CD8-positive, alpha-beta T cell (primary cell): ENCODE measurements at regions of chr15 and their contacts with region 1.

Region 1: DNA sequence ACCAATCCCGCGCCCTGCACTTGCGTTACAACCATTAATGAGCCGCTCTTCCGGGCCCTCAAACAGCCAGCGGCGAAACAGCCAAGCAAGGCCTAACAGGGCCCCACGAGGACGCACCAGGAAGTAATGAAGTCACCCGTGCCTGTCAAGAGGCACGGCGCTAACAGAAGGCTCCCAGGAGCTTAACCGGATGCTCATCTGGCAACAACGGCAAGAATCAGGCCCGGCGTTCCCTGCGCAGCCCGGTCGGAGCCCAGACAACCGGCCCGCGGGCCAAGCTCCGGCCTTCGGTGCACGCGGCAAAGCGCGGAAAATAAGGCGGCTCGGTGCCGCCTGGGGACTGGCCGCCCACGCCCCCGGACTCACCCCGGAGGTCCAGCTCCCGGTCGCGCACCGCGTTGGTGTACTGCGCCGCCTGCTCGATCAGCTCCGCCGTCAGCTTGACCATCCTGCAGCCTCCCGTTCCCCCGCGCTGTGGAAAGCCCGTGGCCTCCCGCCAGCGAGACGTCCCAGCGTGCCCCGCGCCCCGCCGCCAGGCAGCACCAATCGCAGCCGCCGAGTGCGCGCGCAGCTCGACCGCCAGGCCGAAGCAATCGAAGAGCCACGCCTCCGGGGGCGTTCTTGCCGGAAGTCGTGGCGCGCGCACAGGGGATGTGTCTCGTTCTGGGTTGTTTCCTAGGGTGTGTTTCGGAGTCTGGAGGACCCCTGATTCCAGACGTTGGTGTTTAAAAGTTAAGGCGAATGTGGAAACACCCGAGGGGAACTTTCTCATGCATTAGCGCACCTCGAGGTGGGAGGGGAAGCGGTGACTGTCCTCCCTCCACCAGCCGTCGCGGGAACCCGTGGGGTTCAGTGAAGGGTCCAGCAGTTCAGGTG is at the start of gene SNRPA1:
- DNase-seq: peak; percentile 94 to 98 (median 98)
- ATAC-seq: peak; percentile 80
- H3K4me3 ChIP-seq: peak within 1 kb of the TSS; percentile 68 to 97
- H3K4me3 Mint-ChIP-seq: peak within 1 kb of the TSS; percentile 94
- H3K27ac ChIP-seq: peak within 1 kb of the TSS; percentile 95 to 98
- H3K27ac Mint-ChIP-seq: peak within 1 kb of the TSS; percentile 96
- H3K4me1 ChIP-seq: peaks cover 38% of the 10 kb centered on the region
- H3K4me1 Mint-ChIP-seq: peaks cover 53% of the 10 kb centered on the region
- H3K27me3 ChIP-seq: no peaks in the 10 kb centered on the region
- H3K27me3 Mint-ChIP-seq: no peaks in the 10 kb centered on the region
- CTCF ChIP-seq: no peak
- total RNA-seq, gene SNRPA1: 228 to 247 TPM

Region 2: DNA sequence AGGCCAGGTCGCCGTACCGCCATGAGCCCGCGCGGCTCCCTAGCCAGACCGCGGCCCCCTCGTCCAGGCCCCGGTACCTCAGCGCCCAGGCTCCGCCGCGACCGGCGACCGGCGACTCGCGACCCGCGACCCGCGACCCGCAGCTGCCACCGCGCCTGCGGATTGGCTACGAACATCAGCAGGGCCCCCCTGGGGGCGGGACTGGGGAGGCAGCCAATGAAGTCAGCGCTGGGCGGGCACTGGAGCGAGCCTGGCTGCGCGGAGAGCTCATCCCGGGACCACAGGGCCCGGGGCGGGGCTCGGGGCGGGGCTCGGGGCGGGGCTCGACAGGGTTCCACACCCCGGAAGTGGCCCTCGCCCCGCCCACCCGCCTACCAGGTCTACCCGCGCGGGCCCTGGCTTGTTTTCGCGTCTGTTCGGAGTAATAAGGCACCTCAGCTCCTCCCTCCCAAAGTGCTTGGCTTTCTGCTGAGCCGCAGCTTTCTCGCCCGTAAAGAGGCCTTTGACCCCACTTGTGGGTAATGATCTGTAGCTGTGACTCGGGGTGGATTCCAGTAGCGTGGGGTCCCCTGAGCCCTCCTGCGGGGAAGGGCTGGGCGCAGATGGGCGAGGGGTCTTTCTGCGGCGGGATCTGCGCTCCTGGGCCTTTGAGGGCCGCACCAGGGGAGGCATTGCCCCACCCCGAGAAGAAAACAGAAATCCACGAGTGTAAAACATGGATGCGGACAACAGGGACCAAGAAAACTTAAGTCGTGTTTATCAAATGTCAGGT is 1561.5 kb before region 1 on chr15 and contains the start of gene LYSMD4:
- CTCF ChIA-PET with region 1: no interaction called
- POLR2A ChIA-PET with region 1: no interaction called
- intact Hi-C with region 1: loop called (anchors 5 to 10 kb)
- DNase-seq: peak; percentile 97 to 99 (median 98)
- ATAC-seq: peak; percentile 99
- H3K4me3 ChIP-seq: peak within 1 kb of the TSS; percentile 69 to 80
- H3K4me3 Mint-ChIP-seq: peak within 1 kb of the TSS; percentile 89
- H3K27ac ChIP-seq: peak within 1 kb of the TSS; percentile 62 to 87
- H3K27ac Mint-ChIP-seq: peak within 1 kb of the TSS; percentile 95
- H3K4me1 ChIP-seq: peaks cover 13% of the 10 kb centered on the region
- H3K4me1 Mint-ChIP-seq: peaks cover 19% of the 10 kb centered on the region
- H3K27me3 ChIP-seq: no peaks in the 10 kb centered on the region
- H3K27me3 Mint-ChIP-seq: no peaks in the 10 kb centered on the region
- CTCF ChIP-seq: no peak
- total RNA-seq, gene LYSMD4: 7.6 to 7.7 TPM

Region 3: GRCh38 chr15:101242160-101242998 is 52.6 kb before region 1 on chr15:
- CTCF ChIA-PET with region 1: no interaction called
- POLR2A ChIA-PET with region 1: interaction called, 7 read pairs
- intact Hi-C with region 1: loop called in 1 of 2 experiments (anchors 2 kb)
- DNase-seq: peak; percentile 35 to 93 (median 63)
- ATAC-seq: peak; percentile 88
- H3K4me3 ChIP-seq: peak overlapping the region; percentile 38 to 45
- H3K4me3 Mint-ChIP-seq: peak overlapping the region; percentile 71
- H3K27ac ChIP-seq: peak overlapping the region; percentile 13 to 76
- H3K27ac Mint-ChIP-seq: peak overlapping the region; percentile 91
- H3K4me1 ChIP-seq: peaks cover 85% of the 10 kb centered on the region
- H3K4me1 Mint-ChIP-seq: peaks cover 85% of the 10 kb centered on the region
- H3K27me3 ChIP-seq: no peaks in the 10 kb centered on the region
- H3K27me3 Mint-ChIP-seq: no peaks in the 10 kb centered on the region
- CTCF ChIP-seq: no peak

Region 4: DNA sequence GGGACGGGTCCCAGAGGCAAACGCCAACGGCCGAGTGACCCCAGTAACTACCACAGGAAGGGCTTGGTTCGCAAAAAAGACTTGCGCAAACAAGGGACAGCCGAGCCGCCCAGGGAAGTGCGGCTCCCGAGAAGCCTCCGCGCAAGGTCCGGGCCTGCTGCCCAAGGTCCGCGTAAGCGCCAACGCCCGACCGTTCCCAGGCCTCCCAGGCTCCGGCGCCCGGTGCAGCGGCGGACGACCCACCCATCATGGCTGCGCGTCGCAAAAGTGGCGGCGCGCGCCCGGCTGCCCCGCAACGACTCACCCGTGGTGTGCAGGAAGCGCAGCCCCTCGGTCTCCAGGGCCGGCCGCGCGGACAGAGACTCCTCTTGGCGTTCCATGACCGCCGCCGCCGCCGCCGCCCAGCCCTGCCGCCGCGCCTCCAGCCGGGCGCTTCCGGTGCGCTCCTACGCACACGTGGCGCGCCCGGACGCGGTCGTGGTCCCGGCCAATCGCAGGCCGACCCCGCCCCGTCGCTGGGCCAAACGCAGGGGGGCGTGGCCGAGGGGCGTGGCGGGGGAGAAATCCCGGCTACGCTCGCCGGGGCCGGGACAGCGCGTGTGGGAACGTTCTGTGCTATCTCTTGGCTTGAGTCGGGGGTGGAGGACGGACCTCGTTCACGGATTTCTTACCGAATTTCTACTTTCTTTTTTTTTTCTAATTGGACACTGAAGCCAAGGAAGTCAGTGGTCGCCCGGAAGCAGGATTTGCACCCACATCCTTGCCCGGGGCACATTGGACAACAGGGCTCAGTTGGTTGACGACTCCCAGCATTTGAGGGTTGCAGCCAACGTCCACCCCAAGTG is 17.7 kb before region 1 on chr15 and contains the start of gene SELENOS:
- CTCF ChIA-PET with region 1: interaction called, 3 read pairs
- POLR2A ChIA-PET with region 1: interaction called, 5 read pairs
- intact Hi-C with region 1: loop called (anchors 1 kb)
- DNase-seq: peak; percentile 62 to 94 (median 88)
- ATAC-seq: peak; percentile 93
- H3K4me3 ChIP-seq: peak within 1 kb of the TSS; percentile 75 to 77
- H3K4me3 Mint-ChIP-seq: peak within 1 kb of the TSS; percentile 95
- H3K27ac ChIP-seq: peak within 1 kb of the TSS; percentile 65 to 77
- H3K27ac Mint-ChIP-seq: peak within 1 kb of the TSS; percentile 93
- H3K4me1 ChIP-seq: peaks cover 16% of the 10 kb centered on the region
- H3K4me1 Mint-ChIP-seq: peaks cover 24% of the 10 kb centered on the region
- H3K27me3 ChIP-seq: no peaks in the 10 kb centered on the region
- H3K27me3 Mint-ChIP-seq: no peaks in the 10 kb centered on the region
- CTCF ChIP-seq: no peak
- total RNA-seq, gene SELENOS: 46.0 to 50.4 TPM

Region 5: DNA sequence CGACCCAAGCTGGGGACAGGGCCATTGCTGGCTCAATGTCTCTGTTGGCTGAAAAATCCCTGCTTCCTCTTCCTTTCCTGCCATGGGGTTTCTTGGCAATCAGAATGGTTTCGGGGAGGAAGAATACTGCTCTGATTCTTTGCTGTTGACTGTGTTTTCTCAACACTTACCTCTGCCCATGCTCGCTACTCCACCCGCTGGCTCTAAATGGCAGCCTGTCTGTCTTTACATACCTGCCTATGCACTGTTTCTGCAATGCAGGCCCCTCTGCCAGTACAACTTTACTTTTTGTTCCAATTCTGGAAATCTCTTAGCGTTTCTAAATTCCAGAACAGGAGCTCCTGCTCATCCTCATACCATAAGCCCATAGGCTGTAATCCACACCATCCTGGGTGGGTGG is 38.4 kb after region 1 on chr15:
- CTCF ChIA-PET with region 1: interaction called, 3 read pairs
- POLR2A ChIA-PET with region 1: interaction called, 4 read pairs
- intact Hi-C with region 1: loop called (anchors 1 kb)
- DNase-seq: peak in 2 of 9 experiments; percentile 30 to 42
- ATAC-seq: peak; percentile 21
- H3K4me3 ChIP-seq: peak overlapping the region in 1 of 2 experiments; percentile 33
- H3K4me3 Mint-ChIP-seq: no peak overlapping the region
- H3K27ac ChIP-seq: peak overlapping the region; percentile 81 to 86
- H3K27ac Mint-ChIP-seq: peak overlapping the region; percentile 77
- H3K4me1 ChIP-seq: peaks cover 15% of the 10 kb centered on the region
- H3K4me1 Mint-ChIP-seq: peaks cover 25% of the 10 kb centered on the region
- H3K27me3 ChIP-seq: no peaks in the 10 kb centered on the region
- H3K27me3 Mint-ChIP-seq: no peaks in the 10 kb centered on the region
- CTCF ChIP-seq: no peak

Region 6: DNA sequence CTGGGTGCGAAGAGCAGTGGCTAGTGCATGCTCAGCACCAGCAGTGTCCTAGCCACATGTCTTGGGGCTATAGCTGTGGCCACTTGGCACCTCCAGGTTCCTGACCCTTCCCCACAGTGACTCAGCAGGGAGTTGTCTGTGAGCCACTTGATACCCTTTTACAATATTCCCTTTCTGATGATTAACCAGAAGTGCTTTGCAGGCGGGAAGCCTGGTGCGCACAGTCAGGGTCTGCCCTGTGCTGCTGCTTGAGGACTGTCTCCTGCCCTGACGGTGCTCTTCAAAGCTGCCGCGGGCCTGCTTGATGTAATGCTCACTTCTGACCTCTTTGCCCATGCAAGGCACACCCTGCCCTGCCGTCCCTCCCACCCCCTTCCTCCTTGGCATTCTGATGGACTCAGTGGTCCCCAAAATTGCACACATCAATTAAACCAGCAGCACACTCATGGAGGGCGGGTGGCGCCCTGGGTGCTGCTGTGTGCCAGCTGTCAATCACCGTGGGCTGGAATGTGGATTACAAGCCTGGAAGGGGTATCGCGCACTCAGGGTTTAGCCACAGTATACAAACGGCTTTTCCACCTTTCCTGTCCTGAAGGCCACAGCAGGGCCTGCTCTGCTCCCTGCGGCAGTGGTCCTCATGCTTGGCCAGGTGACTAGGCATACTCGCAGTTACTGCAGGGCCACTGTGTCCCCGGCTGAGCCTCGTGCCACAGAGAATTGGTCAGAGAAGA is 235.4 kb after region 1 on chr15:
- CTCF ChIA-PET with region 1: no interaction called
- POLR2A ChIA-PET with region 1: no interaction called
- intact Hi-C with region 1: no loop called
- DNase-seq: no peak
- ATAC-seq: no peak
- H3K4me3 ChIP-seq: no peak overlapping the region
- H3K4me3 Mint-ChIP-seq: no peak overlapping the region
- H3K27ac ChIP-seq: no peak overlapping the region
- H3K27ac Mint-ChIP-seq: no peak overlapping the region
- H3K4me1 ChIP-seq: no peaks in the 10 kb centered on the region
- H3K4me1 Mint-ChIP-seq: no peaks in the 10 kb centered on the region
- H3K27me3 ChIP-seq: no peaks in the 10 kb centered on the region
- H3K27me3 Mint-ChIP-seq: peaks cover 13% of the 10 kb centered on the region
- CTCF ChIP-seq: no peak

Region 7: GRCh38 chr15:101641166-101641764 is 346.3 kb after region 1 on chr15:
- CTCF ChIA-PET with region 1: interaction called, 30 read pairs
- POLR2A ChIA-PET with region 1: interaction called, 3 read pairs
- intact Hi-C with region 1: loop called in 1 of 2 experiments (anchors 1 kb)
- DNase-seq: peak; percentile 53 to 85 (median 75)
- ATAC-seq: peak; percentile 81
- H3K4me3 ChIP-seq: no peak overlapping the region
- H3K4me3 Mint-ChIP-seq: no peak overlapping the region
- H3K27ac ChIP-seq: peak overlapping the region in 1 of 2 experiments; percentile 59
- H3K27ac Mint-ChIP-seq: peak overlapping the region; percentile 89
- H3K4me1 ChIP-seq: peaks cover 13% of the 10 kb centered on the region
- H3K4me1 Mint-ChIP-seq: peaks cover 26% of the 10 kb centered on the region
- H3K27me3 ChIP-seq: no peaks in the 10 kb centered on the region
- H3K27me3 Mint-ChIP-seq: no peaks in the 10 kb centered on the region
- CTCF ChIP-seq: peak; percentile 99

Region 8: DNA sequence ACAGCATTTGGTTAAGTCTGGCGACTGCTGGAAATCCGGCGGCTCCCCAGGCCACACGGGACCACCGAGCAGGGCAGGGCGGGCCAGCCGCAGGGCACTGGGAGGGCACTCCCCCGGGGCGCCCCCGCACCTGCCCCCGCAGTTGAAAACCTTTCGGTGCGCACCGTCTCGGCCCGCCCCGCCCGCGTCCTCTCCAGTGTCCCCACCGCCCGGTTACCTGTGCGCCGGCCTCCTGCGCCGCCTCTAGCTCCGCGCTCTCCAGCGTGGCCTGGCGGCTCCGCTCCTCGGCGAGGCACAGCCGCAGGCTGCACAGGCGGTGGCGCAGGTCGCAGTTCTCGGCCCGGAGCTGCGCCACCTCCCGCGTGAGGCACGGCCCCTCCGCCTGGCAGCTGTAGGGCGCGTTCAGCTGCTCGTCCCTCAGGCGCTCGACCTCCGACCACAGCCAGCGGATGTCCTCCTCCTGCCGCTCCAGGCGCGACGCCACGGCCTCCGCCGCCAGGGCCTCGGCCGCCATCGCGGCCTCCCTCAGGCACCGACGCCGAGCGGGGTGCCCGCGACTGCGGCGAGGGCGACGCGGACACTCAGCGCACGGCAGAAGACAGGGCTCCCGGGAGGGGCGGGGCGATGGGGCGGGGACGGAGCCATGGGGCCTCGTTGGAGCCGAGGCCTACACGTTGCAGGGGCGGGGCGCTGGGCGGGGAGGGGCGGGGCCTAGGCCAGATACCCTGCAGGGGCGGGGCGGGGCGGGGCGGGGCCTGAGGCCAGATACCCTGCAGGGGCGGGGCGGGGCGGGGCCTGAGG is 429.1 kb after region 1 on chr15 and contains the start of gene TARS3:
- CTCF ChIA-PET with region 1: no interaction called
- POLR2A ChIA-PET with region 1: interaction called, 9 read pairs
- intact Hi-C with region 1: loop called (anchors 1 kb)
- DNase-seq: peak; percentile 94 to 98 (median 96)
- ATAC-seq: peak; percentile 93
- H3K4me3 ChIP-seq: peak within 1 kb of the TSS; percentile 40 to 71
- H3K4me3 Mint-ChIP-seq: peak within 1 kb of the TSS; percentile 90
- H3K27ac ChIP-seq: peak within 1 kb of the TSS; percentile 65 to 87
- H3K27ac Mint-ChIP-seq: peak within 1 kb of the TSS; percentile 90
- H3K4me1 ChIP-seq: peaks cover 18% of the 10 kb centered on the region
- H3K4me1 Mint-ChIP-seq: peaks cover 35% of the 10 kb centered on the region
- H3K27me3 ChIP-seq: no peaks in the 10 kb centered on the region
- H3K27me3 Mint-ChIP-seq: no peaks in the 10 kb centered on the region
- CTCF ChIP-seq: no peak
- total RNA-seq, gene TARS3: 12.7 to 13.7 TPM